ENCODE measurements at regions of chr22 and their contacts with region 1.

Region 1: GRCh38 chr22:28019881-28020871 is 101.1 kb upstream of the PITPNB start:
- DNase-seq: peak; percentile 88
- H3K4me3 ChIP-seq: peak overlapping the region in 1 of 8 donors; percentile 28
- H3K27ac ChIP-seq: no peak overlapping the region
- H3K4me1 ChIP-seq: peaks cover 6 to 31% (median 14%) of the 10 kb centered on the region in 6 donors
- H3K27me3 ChIP-seq: no peaks in the 10 kb centered on the region
- CTCF ChIP-seq: peak; percentile 71 to 98 (median 90)
- POLR2A ChIP-seq: no peak

Region 2: GRCh38 chr22:28582806-28583205 is 562.6 kb after region 1 on chr22:
- intact Hi-C with region 1: loop called (anchors 10 kb)
- DNase-seq: no peak
- H3K4me3 ChIP-seq: no peak overlapping the region
- H3K27ac ChIP-seq: no peak overlapping the region
- H3K4me1 ChIP-seq: no peaks in the 10 kb centered on the region
- H3K27me3 ChIP-seq: no peaks in the 10 kb centered on the region
- CTCF ChIP-seq: no peak
- POLR2A ChIP-seq: no peak

Measured in spleen (tissue), 13 donors.